Endothelial cell of umbilical vein (primary cell): ENCODE measurements at regions of chr10 and their contacts with region 1.

Region 1: DNA sequence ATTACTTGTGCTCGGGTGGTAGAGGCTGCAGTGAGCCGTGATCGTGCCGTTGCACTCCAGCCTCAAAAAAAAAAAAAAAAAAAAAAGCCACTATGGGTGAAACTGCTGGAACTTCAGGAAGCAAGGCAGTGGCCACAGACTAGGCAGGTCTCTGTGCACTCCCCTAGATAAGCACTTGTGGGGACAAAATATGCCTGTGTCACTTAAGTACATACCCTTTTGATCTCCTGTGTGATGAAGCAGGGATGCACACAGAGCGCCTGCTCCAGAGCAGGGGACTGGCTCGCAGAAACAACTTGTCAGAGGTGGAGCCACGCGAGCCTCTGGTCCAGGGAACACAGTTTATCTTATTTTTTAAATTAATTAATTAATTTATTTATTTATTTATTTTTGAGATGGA is 42.9 kb upstream of the PSAP start:
- DNase-seq: no peak
- H3K4me3 ChIP-seq: no peak overlapping the region
- H3K27ac ChIP-seq: no peak overlapping the region
- H3K4me1 ChIP-seq: peaks cover 5% of the 10 kb centered on the region
- H3K27me3 ChIP-seq: no peaks in the 10 kb centered on the region
- CTCF ChIP-seq: no peak
- POLR2A ChIP-seq: no peak

Region 2: GRCh38 chr10:71319042-71319799 is 574.7 kb before region 1 on chr10 and contains the start of gene SLC29A3:
- CTCF ChIA-PET with region 1: interaction called, 8 read pairs
- POLR2A ChIA-PET with region 1: no interaction called
- dilution Hi-C with region 1: no loop called
- intact Hi-C with region 1: loop called (anchors 10 kb)
- DNase-seq: peak; percentile 83
- H3K4me3 ChIP-seq: peak within 1 kb of the TSS; percentile 63 to 69 (median 65)
- H3K27ac ChIP-seq: peak within 1 kb of the TSS; percentile 60
- H3K4me1 ChIP-seq: peaks cover 3% of the 10 kb centered on the region
- H3K27me3 ChIP-seq: peaks cover 0 to 1% of the 10 kb centered on the region in 2 experiments
- CTCF ChIP-seq: peak; percentile 79 to 89
- POLR2A ChIP-seq: peak; percentile 68
- total RNA-seq, gene SLC29A3: 3.5 and 5.0 TPM in 2 replicates

Region 3: GRCh38 chr10:71812016-71812912 is 81.7 kb before region 1 on chr10:
- CTCF ChIA-PET with region 1: interaction called, 36 read pairs
- POLR2A ChIA-PET with region 1: no interaction called
- dilution Hi-C with region 1: no loop called
- intact Hi-C with region 1: no loop called
- DNase-seq: peak; percentile 46
- H3K4me3 ChIP-seq: no peak overlapping the region
- H3K27ac ChIP-seq: no peak overlapping the region
- H3K4me1 ChIP-seq: no peaks in the 10 kb centered on the region
- H3K27me3 ChIP-seq: no peaks in the 10 kb centered on the region
- CTCF ChIP-seq: peak; percentile 89 to 92
- POLR2A ChIP-seq: no peak

Region 4: GRCh38 chr10:71845410-71846405 is 48.2 kb before region 1 on chr10:
- CTCF ChIA-PET with region 1: interaction called, 152 read pairs
- POLR2A ChIA-PET with region 1: interaction called, 5 read pairs
- dilution Hi-C with region 1: no loop called
- intact Hi-C with region 1: loop called (anchors 1 kb)
- DNase-seq: no peak
- H3K4me3 ChIP-seq: no peak overlapping the region
- H3K27ac ChIP-seq: no peak overlapping the region
- H3K4me1 ChIP-seq: peaks cover 17% of the 10 kb centered on the region
- H3K27me3 ChIP-seq: no peaks in the 10 kb centered on the region
- CTCF ChIP-seq: no peak
- POLR2A ChIP-seq: no peak

Region 5: DNA sequence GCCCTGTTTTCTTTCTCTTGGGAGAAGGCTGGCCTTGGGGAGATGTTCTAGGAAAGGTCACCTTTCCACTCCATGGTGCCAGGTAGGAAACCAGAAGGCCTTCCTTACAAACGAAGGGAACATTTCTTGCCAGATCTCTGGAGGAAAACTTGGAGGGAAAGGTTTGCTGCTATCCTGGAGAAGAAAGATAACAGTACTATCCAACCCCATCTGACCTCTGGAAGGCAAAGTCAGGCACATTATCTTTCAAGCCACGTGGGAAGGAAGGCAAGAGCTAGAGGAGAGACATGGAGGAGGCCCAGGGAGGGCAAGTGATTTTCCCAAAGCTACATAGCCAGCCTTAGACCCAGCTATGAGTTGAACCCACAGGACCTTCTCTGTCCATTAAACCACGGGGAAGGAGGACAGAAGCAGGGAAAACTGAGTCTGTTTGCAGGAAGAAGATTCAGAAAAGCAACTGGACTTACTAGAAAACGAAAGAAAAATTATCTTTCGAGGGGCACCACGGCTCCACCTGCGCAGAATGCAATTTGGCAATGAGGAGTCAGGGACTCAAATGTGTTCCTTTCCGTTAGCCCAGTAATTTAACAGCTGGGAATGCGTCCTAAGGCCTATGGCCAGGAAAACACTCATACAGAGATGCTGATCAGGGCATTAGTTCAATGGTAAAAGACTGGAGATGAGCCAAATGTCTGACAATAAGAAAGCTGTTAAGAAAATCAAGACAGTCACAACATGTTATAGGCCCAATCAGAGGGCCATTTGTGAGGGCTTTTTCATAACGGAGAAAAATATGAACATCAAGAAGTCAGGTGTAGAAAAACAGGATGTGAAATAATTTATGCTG is 10.9 kb before region 1 on chr10:
- CTCF ChIA-PET with region 1: interaction called, 26 read pairs
- POLR2A ChIA-PET with region 1: no interaction called
- dilution Hi-C with region 1: no loop called
- intact Hi-C with region 1: no loop called
- DNase-seq: peak; percentile 82
- H3K4me3 ChIP-seq: no peak overlapping the region
- H3K27ac ChIP-seq: no peak overlapping the region
- H3K4me1 ChIP-seq: peaks cover 11% of the 10 kb centered on the region
- H3K27me3 ChIP-seq: no peaks in the 10 kb centered on the region
- CTCF ChIP-seq: no peak
- POLR2A ChIP-seq: no peak

Region 6: GRCh38 chr10:71963756-71964668 is 70.1 kb after region 1 on chr10 and contains the start of gene CHST3:
- CTCF ChIA-PET with region 1: interaction called, 16 read pairs
- POLR2A ChIA-PET with region 1: no interaction called
- dilution Hi-C with region 1: no loop called
- intact Hi-C with region 1: no loop called
- DNase-seq: peak; percentile 62
- H3K4me3 ChIP-seq: peak within 1 kb of the TSS; percentile 21 to 57 (median 55)
- H3K27ac ChIP-seq: peak within 1 kb of the TSS; percentile 60
- H3K4me1 ChIP-seq: peaks cover 18% of the 10 kb centered on the region
- H3K27me3 ChIP-seq: no peaks in the 10 kb centered on the region
- CTCF ChIP-seq: no peak
- POLR2A ChIP-seq: peak; percentile 18
- total RNA-seq, gene CHST3: 10.0 and 11.5 TPM in 2 replicates

Region 7: GRCh38 chr10:71990706-71991269 is 96.9 kb after region 1 on chr10:
- CTCF ChIA-PET with region 1: no interaction called
- POLR2A ChIA-PET with region 1: no interaction called
- dilution Hi-C with region 1: no loop called
- intact Hi-C with region 1: no loop called
- DNase-seq: no peak
- H3K4me3 ChIP-seq: no peak overlapping the region
- H3K27ac ChIP-seq: no peak overlapping the region
- H3K4me1 ChIP-seq: peaks cover 4% of the 10 kb centered on the region
- H3K27me3 ChIP-seq: no peaks in the 10 kb centered on the region
- CTCF ChIP-seq: no peak
- POLR2A ChIP-seq: no peak

Region 8: DNA sequence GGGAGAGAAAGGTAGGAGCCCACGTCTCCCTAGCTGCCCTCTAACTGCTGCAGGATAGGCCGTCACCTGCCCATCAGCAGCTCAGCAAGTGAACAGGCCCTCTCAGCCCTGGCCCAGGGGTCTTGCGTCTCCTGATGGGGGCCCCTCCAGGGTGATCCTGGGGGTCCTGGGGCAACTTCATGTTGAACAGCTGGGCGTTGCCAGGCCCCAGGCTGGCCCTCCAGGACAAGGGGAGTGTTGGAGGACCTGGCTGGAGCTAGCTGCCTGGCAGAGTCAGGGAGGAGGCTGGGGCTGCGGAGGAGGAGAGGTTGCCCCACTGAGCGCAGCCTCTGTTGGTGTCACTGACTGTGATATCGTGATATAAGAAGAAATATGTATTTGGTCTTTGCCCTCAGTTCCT is 159.8 kb after region 1 on chr10:
- CTCF ChIA-PET with region 1: interaction called, 199 read pairs
- POLR2A ChIA-PET with region 1: no interaction called
- dilution Hi-C with region 1: no loop called
- intact Hi-C with region 1: loop called (anchors 1 kb)
- DNase-seq: no peak
- H3K4me3 ChIP-seq: no peak overlapping the region
- H3K27ac ChIP-seq: no peak overlapping the region
- H3K4me1 ChIP-seq: peaks cover 2% of the 10 kb centered on the region
- H3K27me3 ChIP-seq: no peaks in the 10 kb centered on the region
- CTCF ChIP-seq: no peak
- POLR2A ChIP-seq: no peak